ENCODE measurements at regions of chr17 and their contacts with region 1.

Region 1: GRCh38 chr17:73007407-73007806 is 85.1 kb downstream of the SLC39A11 start:
- DNase-seq: no peak
- ATAC-seq: no peak
- H3K4me3 ChIP-seq: no peak overlapping the region
- H3K27ac ChIP-seq: no peak overlapping the region
- H3K4me1 ChIP-seq: peaks cover 26% of the 10 kb centered on the region
- H3K27me3 ChIP-seq: no peaks in the 10 kb centered on the region
- CTCF ChIP-seq: no peak
- EP300 ChIP-seq: no peak
- POLR2A ChIP-seq: no peak
- RAD21 ChIP-seq: no peak

Region 2: DNA sequence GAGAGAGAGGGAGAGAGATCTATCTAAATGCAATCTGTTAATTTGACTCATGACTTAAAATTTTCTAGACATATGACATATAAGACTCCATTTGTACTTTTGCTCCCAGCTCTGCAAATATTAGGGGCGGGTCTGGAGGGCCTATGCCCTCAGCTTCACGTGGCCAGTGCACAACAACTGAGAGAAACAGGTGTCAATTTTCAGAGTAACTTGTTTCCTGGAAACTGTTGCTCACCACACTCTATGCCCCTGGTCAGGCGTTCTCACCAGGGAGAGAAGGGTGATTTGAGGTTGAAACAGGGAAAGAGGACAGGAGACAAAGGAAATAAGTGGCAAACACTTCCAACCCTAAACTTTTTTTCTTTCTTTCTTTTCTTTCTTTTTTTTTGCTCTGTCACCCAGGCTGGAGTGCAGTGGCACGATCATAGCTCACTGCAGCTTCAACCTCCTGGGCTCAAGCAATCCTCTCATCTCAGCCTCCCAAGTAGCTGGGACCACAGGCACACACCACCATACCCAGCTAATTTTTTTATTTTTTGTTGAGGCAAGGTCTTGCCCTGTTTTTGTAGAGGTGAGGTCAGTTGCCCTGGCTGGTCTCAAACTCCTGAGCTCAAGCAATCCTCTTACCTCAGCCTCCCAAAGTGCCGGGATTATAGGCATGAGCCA is 184.9 kb before region 1 on chr17:
- CTCF ChIA-PET with region 1: no interaction called
- POLR2A ChIA-PET with region 1: no interaction called
- in situ Hi-C with region 1: no loop called
- intact Hi-C with region 1: loop called (anchors 1 kb)
- DNase-seq: peak; percentile 64
- ATAC-seq: peak; percentile 95
- H3K4me3 ChIP-seq: no peak overlapping the region
- H3K27ac ChIP-seq: peak overlapping the region; percentile 43
- H3K4me1 ChIP-seq: peaks cover 20% of the 10 kb centered on the region
- H3K27me3 ChIP-seq: no peaks in the 10 kb centered on the region
- CTCF ChIP-seq: no peak
- EP300 ChIP-seq: peak in 1 of 2 experiments; percentile 51; a peak in 1 of 4 replicates
- POLR2A ChIP-seq: no peak
- RAD21 ChIP-seq: no peak

Region 3: GRCh38 chr17:73071066-73071999 is 63.9 kb after region 1 on chr17:
- CTCF ChIA-PET with region 1: no interaction called
- POLR2A ChIA-PET with region 1: no interaction called
- in situ Hi-C with region 1: no loop called
- intact Hi-C with region 1: no loop called
- DNase-seq: peak; percentile 80
- ATAC-seq: peak; percentile 44
- H3K4me3 ChIP-seq: no peak overlapping the region
- H3K27ac ChIP-seq: peak overlapping the region; percentile 39
- H3K4me1 ChIP-seq: peaks cover 61% of the 10 kb centered on the region
- H3K27me3 ChIP-seq: no peaks in the 10 kb centered on the region
- CTCF ChIP-seq: no peak
- EP300 ChIP-seq: peak in 1 of 2 experiments; percentile 18; a peak in 1 of 4 replicates
- POLR2A ChIP-seq: no peak
- RAD21 ChIP-seq: no peak

Region 4: GRCh38 chr17:73122953-73123605 is 115.7 kb after region 1 on chr17:
- CTCF ChIA-PET with region 1: no interaction called
- POLR2A ChIA-PET with region 1: no interaction called
- in situ Hi-C with region 1: no loop called
- intact Hi-C with region 1: loop called (anchors 1 kb)
- DNase-seq: peak; percentile 59
- ATAC-seq: peak; percentile 83
- H3K4me3 ChIP-seq: peak overlapping the region in 2 of 3 experiments; percentile 13 to 53; a peak in 4 of 6 replicates
- H3K27ac ChIP-seq: no peak overlapping the region
- H3K4me1 ChIP-seq: peaks cover 30% of the 10 kb centered on the region
- H3K27me3 ChIP-seq: peaks cover 0 to 2% of the 10 kb centered on the region in 2 experiments; a peak in 3 of 5 replicates
- CTCF ChIP-seq: no peak
- EP300 ChIP-seq: peak in 1 of 2 experiments; percentile 36; a peak in 1 of 4 replicates
- POLR2A ChIP-seq: peak in 1 of 2 experiments; percentile 60; a peak in 1 of 4 replicates
- RAD21 ChIP-seq: no peak

Region 5: DNA sequence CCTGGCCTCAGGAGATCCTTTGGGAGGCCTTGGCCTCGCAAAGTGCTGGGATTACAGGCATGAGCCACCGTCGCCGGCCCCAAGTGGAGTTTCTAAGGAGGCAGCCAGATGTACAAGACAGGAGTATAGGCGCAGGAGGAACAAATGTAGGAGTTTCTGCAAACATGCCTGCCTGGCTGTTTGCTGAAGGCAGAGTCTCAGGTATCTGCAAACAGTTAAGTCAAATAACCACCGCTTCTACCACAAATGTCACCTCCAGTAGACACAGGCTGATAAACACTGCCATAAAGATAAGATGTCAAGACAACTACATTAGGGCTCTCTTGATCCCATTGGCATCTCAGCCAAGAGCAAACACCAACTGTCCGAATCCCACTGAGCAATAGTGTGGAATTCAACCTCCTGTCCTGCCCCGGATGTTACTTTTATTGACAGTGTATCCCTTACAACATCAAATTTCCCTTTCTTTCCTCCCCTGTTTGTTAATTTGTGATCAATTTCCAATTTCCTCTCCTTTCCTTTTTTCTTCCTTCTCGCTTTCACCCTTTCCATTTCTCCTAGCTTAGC is 179.9 kb after region 1 on chr17:
- CTCF ChIA-PET with region 1: interaction called, 3 read pairs
- POLR2A ChIA-PET with region 1: no interaction called
- in situ Hi-C with region 1: no loop called
- intact Hi-C with region 1: loop called (anchors 1 kb)
- DNase-seq: peak; percentile 98
- ATAC-seq: peak; percentile 81
- H3K4me3 ChIP-seq: peak overlapping the region in 1 of 3 experiments; percentile 3; a peak in 2 of 6 replicates
- H3K27ac ChIP-seq: no peak overlapping the region
- H3K4me1 ChIP-seq: peaks cover 72% of the 10 kb centered on the region
- H3K27me3 ChIP-seq: peaks cover 0 to 28% of the 10 kb centered on the region in 2 experiments; a peak in 3 of 5 replicates
- CTCF ChIP-seq: peak; percentile 20; the same call in 1 of the 2 replicates
- EP300 ChIP-seq: peak; percentile 33 to 96; a peak in 3 of 4 replicates
- POLR2A ChIP-seq: no peak
- RAD21 ChIP-seq: no peak